ENCODE measurements at regions of chr4 and their contacts with region 1.

Region 1: DNA sequence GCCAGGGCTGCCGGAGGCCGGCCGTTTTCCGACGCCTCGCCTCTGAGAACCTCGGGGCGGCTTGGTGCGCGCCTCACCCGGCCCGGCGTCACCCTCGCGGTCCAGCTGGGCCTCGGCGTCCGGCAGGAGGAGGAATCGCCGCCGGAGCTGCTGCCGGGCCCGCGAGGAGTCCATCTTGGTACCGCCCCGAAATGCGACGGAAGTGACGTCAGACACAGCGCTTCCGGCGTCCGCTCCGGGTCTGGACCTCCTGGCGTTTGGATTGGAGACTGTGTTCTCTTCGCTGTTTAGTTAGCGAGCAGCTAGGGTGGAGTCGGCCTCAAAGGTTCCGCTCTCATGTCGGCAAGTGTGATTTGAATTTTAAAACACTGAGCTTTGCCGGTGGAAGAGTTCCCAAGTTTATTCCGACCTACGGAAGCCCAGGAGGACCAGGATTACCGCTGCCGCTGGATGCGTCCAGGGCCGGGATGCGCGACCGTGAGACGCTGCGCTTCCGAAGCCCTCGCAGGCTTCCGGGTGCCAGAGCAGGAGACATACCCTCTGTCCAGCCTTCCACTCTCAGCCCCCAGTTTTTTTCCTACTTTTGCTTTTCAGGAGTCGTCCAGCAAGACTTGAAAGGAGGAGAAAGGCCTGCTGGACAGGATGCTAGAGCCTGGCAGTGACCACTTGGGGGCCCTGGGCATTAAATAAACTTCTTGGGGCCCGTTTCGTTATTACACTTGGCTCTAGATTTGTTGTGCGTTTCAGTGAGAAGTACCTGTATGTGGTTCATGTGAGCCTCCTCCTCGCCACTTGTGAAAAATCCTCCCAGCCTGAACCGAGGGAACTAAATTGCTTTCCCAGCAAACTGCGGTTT is at the start of gene TMEM128:
- DNase-seq: peak; percentile 96
- ATAC-seq: peak; percentile 96
- H3K4me3 ChIP-seq: peak within 1 kb of the TSS; percentile 67 to 98 (median 84)
- H3K4me3 Mint-ChIP-seq: peak within 1 kb of the TSS; percentile 88
- H3K27ac ChIP-seq: peak within 1 kb of the TSS; percentile 88
- H3K27ac Mint-ChIP-seq: peak within 1 kb of the TSS; percentile 97
- H3K4me1 ChIP-seq: peaks cover 14 to 17% of the 10 kb centered on the region in 2 donors
- H3K4me1 Mint-ChIP-seq: peaks cover 21% of the 10 kb centered on the region
- H3K27me3 ChIP-seq: peaks cover 0 to 4% (median 1%) of the 10 kb centered on the region in 4 experiments
- H3K27me3 Mint-ChIP-seq: peaks cover under 1% of the 10 kb centered on the region
- CTCF ChIP-seq: no peak
- total RNA-seq, gene TMEM128: 16.3 and 17.3 TPM in 2 replicates

Region 2: DNA sequence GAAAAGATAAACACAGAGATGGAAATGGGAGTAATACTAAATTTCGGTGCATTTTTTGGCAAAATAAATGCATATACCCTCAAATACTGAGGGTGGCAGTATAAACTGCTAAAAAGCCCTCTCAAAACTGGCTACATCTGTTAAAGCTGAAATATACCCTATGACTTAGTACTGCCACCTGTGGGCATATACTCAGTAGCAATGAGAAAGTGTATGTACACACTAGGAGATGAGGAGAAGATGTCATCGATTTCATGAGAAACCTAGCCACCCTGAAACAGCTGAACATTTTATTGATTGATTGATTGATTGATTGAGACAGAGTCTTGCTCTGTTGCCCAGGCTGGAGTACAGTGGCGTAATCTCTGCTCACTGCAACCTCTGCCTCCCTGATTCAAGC is 12.0 kb after region 1 on chr4:
- CTCF ChIA-PET with region 1: interaction called, 16 read pairs
- POLR2A ChIA-PET with region 1: no interaction called
- intact Hi-C with region 1: no loop called
- DNase-seq: peak; percentile 42
- ATAC-seq: peak; percentile 80
- H3K4me3 ChIP-seq: no peak overlapping the region
- H3K4me3 Mint-ChIP-seq: no peak overlapping the region
- H3K27ac ChIP-seq: no peak overlapping the region
- H3K27ac Mint-ChIP-seq: no peak overlapping the region
- H3K4me1 ChIP-seq: no peaks in the 10 kb centered on the region
- H3K4me1 Mint-ChIP-seq: no peaks in the 10 kb centered on the region
- H3K27me3 ChIP-seq: peaks cover 0 to 6% (median 0%) of the 10 kb centered on the region in 4 experiments
- H3K27me3 Mint-ChIP-seq: peaks cover 7% of the 10 kb centered on the region
- CTCF ChIP-seq: peak; percentile 59

Region 3: DNA sequence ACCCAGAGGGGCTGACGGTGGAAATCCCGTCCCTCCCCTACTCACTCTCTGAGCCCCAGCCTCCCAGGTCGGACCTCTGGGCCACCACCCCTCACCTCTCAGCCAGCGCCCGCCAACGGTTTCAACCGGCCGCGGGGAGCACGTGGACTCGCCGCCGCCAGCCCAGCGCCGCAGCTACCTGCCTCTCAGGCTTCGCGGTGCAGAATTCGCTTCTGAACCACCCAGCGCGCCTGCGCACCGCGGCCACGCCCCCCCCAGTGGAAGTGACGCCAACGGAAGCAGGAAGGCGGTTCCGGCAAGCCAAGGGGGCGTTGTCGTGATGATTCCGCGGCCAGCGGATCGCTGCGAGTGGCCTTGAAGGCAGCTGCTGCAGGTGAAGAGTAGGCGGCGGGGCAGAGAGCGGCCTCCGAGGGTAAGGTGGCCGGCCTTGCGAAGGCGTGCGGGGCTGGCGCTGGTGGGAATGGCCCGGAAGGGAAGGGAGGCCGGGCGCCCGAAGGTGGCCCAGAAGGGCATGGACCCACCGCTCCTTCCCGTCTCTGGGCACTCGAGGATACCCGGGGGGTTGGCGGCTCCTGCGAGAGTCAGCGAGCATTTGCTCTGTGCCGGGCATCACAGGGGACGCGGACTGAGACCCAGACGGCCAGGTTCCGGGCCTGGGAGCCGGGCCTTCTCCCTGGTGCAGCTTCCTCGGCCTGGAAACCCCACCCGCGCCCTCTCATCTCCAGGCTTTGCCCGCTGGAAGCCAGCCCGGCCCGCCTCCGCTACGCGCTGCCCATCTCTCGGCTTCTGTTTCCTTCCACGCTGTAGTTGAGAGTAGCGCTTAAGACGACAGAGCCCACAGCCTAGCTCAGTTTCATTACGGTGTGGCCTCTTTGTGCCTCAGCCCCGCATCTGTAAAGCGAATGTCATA is 41.9 kb after region 1 on chr4 and contains the starts of genes LYAR and ZBTB49:
- CTCF ChIA-PET with region 1: interaction called, 5 read pairs
- POLR2A ChIA-PET with region 1: interaction called, 7 read pairs
- intact Hi-C with region 1: loop called (anchors 1 kb)
- DNase-seq: peak; percentile 93
- ATAC-seq: peak; percentile 92
- H3K4me3 ChIP-seq: peak within 1 kb of the TSS; percentile 63 to 88 (median 74)
- H3K4me3 Mint-ChIP-seq: peak within 1 kb of the TSS; percentile 98
- H3K27ac ChIP-seq: peak within 1 kb of the TSS; percentile 47 to 76
- H3K27ac Mint-ChIP-seq: peak within 1 kb of the TSS; percentile 92
- H3K4me1 ChIP-seq: peaks cover 19 to 22% of the 10 kb centered on the region in 2 donors
- H3K4me1 Mint-ChIP-seq: peaks cover 46% of the 10 kb centered on the region
- H3K27me3 ChIP-seq: no peaks in the 10 kb centered on the region
- H3K27me3 Mint-ChIP-seq: no peaks in the 10 kb centered on the region
- CTCF ChIP-seq: no peak
- total RNA-seq, gene LYAR: 11.4 and 11.5 TPM in 2 replicates
- total RNA-seq, gene ZBTB49: 16.9 and 17.8 TPM in 2 replicates

Region 4: DNA sequence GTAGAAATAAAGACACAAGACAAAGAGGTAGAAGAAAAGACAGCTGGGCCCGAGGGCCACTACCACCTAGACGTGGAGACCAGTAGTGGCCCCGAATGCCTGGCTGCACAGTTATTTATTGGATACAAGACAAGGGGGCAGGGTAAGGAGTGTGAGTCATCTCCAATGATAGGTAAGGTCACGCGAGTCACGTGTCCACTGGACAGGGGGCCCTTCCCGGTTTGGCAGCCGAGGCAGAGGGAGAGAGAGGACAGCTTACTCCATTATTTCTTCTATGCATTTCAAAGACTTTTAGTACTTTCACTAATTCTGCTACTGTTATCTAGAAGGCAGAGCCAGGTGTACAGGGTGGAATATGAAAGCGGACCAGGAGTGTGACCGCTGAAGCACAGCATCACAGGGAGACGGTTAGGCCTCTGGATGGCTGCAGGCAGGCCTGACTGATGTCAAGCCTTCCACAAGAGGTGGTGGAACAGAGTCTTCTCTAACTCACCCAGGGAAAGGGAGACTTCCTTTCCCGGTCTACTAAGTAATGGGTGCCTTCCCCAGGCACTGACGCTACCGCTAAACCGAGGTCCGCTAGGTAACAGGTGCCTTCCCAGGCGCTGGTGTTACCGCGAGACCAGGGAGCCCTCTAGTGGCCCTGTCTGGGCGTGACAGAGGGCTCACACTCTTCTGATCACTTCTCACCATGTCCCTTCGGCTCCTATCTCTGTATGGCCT is 86.7 kb after region 1 on chr4:
- CTCF ChIA-PET with region 1: interaction called, 18 read pairs
- POLR2A ChIA-PET with region 1: no interaction called
- intact Hi-C with region 1: loop called (anchors 1 kb)
- DNase-seq: peak; percentile 74
- ATAC-seq: peak; percentile 65
- H3K4me3 ChIP-seq: no peak overlapping the region
- H3K4me3 Mint-ChIP-seq: no peak overlapping the region
- H3K27ac ChIP-seq: no peak overlapping the region
- H3K27ac Mint-ChIP-seq: no peak overlapping the region
- H3K4me1 ChIP-seq: peaks cover 0 to 8% of the 10 kb centered on the region in 2 donors
- H3K4me1 Mint-ChIP-seq: peaks cover 4% of the 10 kb centered on the region
- H3K27me3 ChIP-seq: peaks cover 0 to 11% (median under 1%) of the 10 kb centered on the region in 4 experiments
- H3K27me3 Mint-ChIP-seq: peaks cover 14% of the 10 kb centered on the region
- CTCF ChIP-seq: peak; percentile 86